ENCODE measurements at regions of chr15 and their contacts with region 1.

Region 1: DNA sequence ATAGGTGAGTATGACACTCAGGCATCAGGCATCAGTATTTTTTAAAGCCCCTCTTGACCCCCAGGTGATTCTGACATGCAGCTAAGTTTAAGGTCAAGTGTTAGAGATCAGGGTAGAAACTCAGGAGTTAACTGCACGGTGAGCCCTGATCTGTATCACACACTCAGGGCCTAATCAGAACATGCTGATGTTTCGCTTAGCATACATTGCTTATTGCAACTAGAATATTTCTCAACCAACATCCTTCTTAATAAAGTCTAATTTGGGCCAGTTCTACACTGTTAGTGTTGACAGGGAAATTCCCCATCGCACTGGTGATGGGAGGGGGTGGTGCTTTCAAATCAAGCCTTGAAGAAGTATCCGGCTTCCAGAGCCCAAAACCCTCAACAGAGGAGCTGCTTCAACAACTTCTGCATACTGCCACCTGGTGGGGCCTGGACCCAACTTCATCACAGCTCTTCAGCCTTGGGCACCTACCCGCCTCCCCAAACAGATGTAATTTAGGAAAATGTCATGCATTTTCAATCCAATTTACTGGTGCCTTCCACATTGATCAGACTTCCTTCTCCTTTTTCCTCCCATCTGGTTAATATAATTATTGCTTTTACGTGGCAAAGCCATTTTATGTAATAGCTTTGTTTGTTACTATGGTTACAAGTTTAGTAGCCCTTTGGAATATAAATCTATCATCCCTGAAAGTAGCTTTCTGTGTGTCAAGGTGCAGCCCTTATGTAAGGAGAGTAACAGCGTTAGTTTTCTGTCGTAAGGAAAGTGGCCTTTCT is 312.2 kb downstream of the RORA start:
- DNase-seq: peak; percentile 91
- ATAC-seq: peak; percentile 90

Region 2: DNA sequence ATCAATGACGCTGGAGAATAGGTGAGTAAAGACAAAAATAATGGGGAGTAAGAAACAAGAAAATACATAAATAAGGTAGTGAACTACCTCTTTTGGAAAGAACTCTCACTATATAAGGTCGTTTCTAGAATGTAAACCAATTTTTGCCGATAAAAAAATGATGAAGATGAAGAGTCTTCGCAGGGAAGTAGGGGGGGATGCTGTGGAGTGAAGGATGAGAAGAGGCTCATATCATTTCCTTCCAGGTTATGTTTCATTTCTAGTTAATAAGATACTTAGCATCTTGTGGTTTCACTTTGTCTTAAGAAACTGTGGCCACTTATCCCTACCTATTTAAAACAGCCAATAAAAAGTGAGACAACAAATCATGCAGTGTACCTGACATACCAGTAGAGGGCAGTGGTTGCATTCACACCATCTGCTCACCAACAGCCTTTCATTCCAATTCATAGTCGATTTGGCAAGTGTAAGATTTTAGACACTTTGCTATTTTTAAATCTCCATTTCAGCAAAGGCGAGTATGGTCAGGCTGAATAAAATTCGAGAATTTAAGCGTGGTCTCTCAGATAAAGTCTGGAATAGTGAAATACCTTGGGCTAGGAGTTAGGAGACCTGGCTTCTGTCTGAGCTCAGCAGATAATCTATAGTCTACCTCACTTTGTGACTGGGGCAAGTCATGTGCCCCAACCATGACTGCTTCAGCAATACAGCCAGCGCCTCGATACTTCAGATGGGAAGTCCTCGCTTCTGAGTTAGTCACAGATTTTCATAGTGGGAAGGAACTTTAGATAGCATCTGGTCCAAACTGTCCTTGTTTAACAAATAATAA is 409.1 kb before region 1 on chr15:
- intact Hi-C with region 1: loop called (anchors 5 kb)
- DNase-seq: no peak
- ATAC-seq: peak; percentile 77

Region 3: DNA sequence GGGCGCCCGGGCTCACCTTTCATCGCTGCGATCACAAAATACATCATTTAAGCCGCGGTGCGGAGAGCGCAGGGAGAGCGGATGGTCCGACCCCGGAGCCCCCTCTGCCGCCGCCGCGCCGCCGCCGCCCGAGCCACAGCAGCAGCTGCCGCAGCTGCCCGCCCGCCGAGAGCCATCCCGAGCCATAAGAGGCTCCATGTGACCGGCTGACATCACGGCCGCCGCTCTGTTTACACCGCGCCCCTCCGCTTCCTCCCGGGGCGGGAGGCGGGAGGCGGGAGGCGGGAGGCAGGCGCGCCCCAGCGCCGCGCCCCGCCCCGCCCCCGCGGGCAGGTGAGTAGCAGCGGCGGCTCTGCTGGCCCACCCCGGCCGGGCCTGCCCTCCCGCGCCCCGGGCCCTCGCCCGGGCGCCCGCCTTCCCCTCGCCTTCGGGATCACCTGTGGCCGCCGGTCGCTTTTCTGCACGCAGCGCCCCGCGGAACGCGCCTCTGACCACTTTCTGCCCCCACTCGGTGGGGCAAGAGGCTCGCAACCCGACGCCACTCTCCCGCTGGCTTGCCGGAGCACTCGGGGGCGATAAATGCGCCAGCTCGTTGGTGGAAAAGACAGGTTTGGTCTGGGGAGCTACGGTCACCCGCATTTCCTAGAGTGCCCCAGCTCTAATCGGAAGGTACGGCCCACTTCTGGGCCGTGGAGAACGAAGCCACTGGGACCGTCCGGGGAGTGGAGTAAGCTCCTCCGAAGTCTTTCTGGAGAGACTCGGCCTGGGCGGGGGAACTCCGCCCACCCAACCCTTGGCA is 324.3 kb before region 1 on chr15:
- intact Hi-C with region 1: loop called (anchors 2 kb)
- DNase-seq: peak; percentile 91
- ATAC-seq: peak; percentile 94

Region 4: DNA sequence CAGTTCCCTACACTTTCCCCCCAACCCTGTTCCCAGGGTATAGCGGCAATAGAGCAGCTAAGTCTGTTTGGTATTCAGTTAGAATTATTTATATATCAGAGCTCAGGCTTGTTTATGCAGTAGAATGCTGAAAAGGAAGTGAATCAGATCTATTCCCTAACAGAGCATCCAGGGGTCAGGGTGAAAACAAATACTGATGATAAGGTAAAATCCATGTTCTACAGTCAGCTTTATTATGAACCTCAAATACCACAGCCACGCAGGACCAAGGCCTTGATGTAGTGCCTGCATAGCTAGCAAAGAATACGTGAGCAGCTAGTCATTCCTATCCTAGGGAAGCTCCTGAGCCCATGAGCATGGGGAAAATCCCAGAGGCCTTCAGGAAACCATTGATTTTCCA is 208.2 kb before region 1 on chr15:
- intact Hi-C with region 1: no loop called
- DNase-seq: no peak
- ATAC-seq: no peak

Region 5: GRCh38 chr15:60745469-60746061 is 171.3 kb before region 1 on chr15:
- intact Hi-C with region 1: loop called (anchors 5 kb)
- DNase-seq: peak; percentile 76
- ATAC-seq: peak; percentile 95

Region 6: DNA sequence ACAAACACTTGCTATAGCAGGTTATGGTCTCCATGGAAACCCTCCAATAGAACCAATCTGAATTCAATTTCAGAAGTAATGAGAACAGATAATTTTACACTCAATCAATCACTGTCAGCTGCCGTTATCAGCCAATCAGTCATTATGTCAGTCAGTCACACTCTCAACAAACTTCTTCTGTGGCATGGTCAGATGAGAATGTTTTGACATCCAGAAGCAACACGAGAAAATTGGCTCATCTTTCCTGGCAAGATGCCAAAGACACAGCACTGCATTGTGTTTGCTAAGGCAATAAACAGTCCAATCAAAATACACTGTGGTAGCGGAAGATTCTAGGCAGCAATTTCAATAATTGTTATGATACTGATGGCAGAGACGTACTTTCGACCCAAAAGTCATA is 121.5 kb after region 1 on chr15:
- intact Hi-C with region 1: loop called (anchors 10 kb)
- DNase-seq: no peak
- ATAC-seq: peak; percentile 41

Region 7: GRCh38 chr15:61051569-61052031 is 134.7 kb after region 1 on chr15:
- intact Hi-C with region 1: loop called (anchors 2 kb)
- DNase-seq: no peak
- ATAC-seq: peak; percentile 81

Region 8: GRCh38 chr15:61155741-61156700 is 239.2 kb after region 1 on chr15:
- intact Hi-C with region 1: loop called (anchors 5 kb)
- DNase-seq: peak; percentile 72
- ATAC-seq: peak; percentile 83

Measured in Right ventricle myocardium inferior (tissue), 1 donor.